ENCODE measurements at regions of chr10 and their contacts with region 1.

Region 1: DNA sequence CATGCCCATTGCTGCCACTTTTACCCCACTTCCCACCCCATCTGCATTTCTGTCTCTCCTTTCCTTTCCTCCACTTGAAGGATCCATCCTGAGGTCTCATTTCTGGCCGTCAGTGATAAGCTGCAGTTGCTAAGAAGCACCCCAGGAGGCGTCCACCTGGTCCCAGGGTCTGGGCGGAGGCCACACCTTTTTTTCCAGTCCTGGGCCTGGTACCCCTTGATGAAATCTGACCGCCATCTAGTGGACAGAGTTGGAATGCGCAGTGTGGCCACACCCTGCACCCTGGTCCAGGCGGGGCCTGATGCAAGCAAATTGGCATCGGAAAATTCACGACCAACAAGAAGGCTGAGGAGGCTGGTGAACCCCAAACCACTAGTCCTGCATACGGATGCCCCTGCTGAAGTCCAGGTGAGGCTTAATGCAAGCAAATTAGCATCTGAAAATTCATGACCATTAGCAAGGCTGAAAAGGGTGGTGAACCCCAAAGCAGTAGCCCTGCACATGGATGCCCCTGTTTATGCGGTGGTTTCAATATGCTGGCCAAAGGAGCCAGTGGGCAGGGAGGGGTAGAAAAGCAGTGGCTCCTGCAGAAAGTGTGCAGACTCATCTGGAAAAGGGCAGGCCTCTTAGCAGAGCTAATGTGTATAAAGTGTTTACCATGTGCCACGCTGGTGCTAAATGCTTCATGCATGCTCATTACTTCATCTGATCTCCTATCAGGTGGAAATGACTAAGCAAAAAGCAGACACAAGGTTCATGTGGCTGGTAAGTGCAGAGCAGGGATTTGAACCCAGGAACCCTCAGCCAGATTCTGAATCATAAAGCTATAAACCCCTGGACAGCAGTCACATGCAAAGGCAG is 43.2 kb downstream of the GPAM start:
- DNase-seq: peak; percentile 79
- H3K4me3 ChIP-seq: no peak overlapping the region; a peak in 1 of 4 replicates
- H3K27ac ChIP-seq: no peak overlapping the region
- H3K4me1 ChIP-seq: peaks cover 0 to 5% of the 10 kb centered on the region in 2 experiments; a peak in 1 of 4 replicates
- H3K27me3 ChIP-seq: no peaks in the 10 kb centered on the region
- CTCF ChIP-seq: peak; percentile 84
- EP300 ChIP-seq: no peak
- RAD21 ChIP-seq: peak; percentile 86

Region 2: DNA sequence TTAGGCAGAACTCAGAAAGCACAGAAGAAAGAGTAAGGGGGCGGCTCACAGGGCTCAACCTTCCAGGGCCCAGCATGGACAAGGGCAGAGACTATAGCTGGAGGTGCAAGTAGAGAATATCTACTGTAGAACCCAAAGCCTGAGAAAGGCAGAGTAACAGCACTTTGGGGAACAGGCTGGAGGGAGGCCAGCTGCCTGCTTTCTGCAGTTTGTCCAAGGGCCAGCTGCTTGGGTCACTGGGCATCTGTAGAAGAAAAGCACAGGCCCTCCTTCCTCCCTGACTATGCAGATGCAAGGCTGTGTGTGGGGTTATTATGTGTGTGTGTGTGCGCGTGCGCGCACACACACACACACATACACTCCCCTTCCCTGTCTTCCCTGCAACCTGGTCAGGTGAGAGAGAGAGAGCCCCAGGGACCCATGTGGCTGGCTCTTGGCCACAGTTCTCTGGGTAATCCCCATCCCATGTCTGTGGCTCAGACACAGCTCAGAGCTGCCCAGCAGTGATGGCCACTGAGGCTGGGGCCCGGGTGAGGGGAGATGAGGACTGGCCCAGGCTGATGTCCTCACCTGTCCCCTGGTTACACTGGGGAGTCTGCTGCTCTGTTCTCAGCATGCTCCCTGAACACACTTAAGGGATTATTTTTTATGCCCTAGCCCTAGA is 1054.5 kb before region 1 on chr10:
- CTCF ChIA-PET with region 1: interaction called, 13 read pairs
- POLR2A ChIA-PET with region 1: no interaction called
- DNase-seq: no peak
- H3K4me3 ChIP-seq: no peak overlapping the region
- H3K27ac ChIP-seq: no peak overlapping the region
- H3K4me1 ChIP-seq: no peaks in the 10 kb centered on the region; a peak in 1 of 4 replicates
- H3K27me3 ChIP-seq: no peaks in the 10 kb centered on the region
- CTCF ChIP-seq: no peak
- EP300 ChIP-seq: no peak
- RAD21 ChIP-seq: no peak

Region 3: DNA sequence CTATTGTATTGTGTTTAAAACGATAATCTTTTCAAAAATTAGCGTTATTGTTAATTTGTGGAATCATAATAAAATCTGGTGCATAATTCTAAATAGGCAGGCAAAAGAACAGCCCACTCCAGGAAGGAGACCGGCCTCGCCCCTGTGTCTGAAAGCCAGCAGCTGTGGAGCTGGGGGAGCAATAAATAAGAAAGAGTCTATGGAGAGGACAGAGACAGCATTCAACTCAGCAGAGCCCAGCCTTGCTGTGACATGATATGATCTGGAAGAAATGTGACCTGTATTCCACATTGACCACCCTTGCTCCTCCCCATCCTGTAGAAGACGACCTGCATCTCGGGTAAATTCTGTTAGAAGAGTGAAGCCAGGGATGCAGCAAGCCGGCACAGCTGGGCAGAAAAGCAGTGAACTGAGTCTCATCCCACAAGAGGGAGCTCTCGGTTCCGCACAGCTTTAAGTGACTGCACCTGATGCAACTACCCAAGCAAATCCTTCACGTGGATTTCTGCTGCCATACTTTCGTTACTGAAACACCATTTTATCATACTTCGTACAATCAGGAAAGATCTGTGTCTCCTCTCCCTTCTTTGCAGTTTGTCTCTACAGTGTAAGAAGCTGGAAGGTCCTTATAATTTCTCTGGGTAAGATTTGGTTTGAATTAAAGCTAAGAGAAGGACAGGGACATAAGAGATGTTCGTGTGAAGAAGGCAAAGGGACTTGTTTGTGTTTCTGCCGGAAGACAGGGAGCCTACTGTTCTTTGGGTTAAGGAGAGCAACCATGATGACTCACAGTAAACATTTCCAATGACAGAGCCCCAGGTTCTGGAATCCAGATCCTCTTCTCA is 383.9 kb before region 1 on chr10:
- CTCF ChIA-PET with region 1: interaction called, 102 read pairs
- POLR2A ChIA-PET with region 1: interaction called, 4 read pairs
- DNase-seq: peak; percentile 18
- H3K4me3 ChIP-seq: peak overlapping the region in 1 of 2 experiments; percentile 23; a peak in 1 of 4 replicates
- H3K27ac ChIP-seq: no peak overlapping the region
- H3K4me1 ChIP-seq: no peaks in the 10 kb centered on the region
- H3K27me3 ChIP-seq: no peaks in the 10 kb centered on the region
- CTCF ChIP-seq: no peak
- EP300 ChIP-seq: no peak
- RAD21 ChIP-seq: peak; percentile 70

Region 4: GRCh38 chr10:112115799-112116385 is 24.4 kb before region 1 on chr10:
- CTCF ChIA-PET with region 1: interaction called, 238 read pairs
- POLR2A ChIA-PET with region 1: no interaction called
- DNase-seq: peak; percentile 67
- H3K4me3 ChIP-seq: no peak overlapping the region; a peak in 1 of 4 replicates
- H3K27ac ChIP-seq: no peak overlapping the region
- H3K4me1 ChIP-seq: no peaks in the 10 kb centered on the region
- H3K27me3 ChIP-seq: no peaks in the 10 kb centered on the region
- CTCF ChIP-seq: peak; percentile 64
- EP300 ChIP-seq: no peak
- RAD21 ChIP-seq: peak; percentile 64

Region 5: DNA sequence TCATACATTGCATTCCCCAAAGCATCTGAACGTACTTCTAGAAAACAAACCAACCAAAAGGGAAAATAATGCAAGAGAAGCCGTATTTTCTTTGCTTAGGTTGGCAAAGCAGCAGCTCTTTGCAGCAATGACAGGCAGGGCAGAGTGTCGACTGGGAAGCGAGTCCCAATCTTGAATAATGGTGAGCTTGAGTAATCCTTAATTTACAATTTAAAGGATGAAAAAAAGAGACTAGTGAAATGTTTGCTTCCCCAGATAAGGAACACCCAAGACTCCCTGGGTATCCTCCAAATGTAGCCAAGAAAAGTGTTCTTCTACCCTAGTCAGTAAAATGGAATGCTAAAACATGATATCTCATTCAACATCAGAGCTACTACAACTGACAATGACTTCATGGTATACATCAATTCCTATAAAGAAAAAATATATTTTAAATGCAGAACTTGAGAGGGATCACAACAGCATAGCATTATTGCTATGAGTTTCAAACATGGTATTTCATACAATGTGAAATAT is 11.2 kb after region 1 on chr10:
- CTCF ChIA-PET with region 1: interaction called, 17 read pairs
- POLR2A ChIA-PET with region 1: no interaction called
- DNase-seq: no peak
- H3K4me3 ChIP-seq: no peak overlapping the region
- H3K27ac ChIP-seq: no peak overlapping the region
- H3K4me1 ChIP-seq: no peaks in the 10 kb centered on the region; a peak in 1 of 4 replicates
- H3K27me3 ChIP-seq: no peaks in the 10 kb centered on the region
- CTCF ChIP-seq: no peak
- EP300 ChIP-seq: no peak
- RAD21 ChIP-seq: no peak

Region 6: GRCh38 chr10:112307358-112308124 is 167.2 kb after region 1 on chr10:
- CTCF ChIA-PET with region 1: interaction called, 125 read pairs
- POLR2A ChIA-PET with region 1: no interaction called
- DNase-seq: peak; percentile 66
- H3K4me3 ChIP-seq: no peak overlapping the region
- H3K27ac ChIP-seq: no peak overlapping the region
- H3K4me1 ChIP-seq: peaks cover 0 to 5% of the 10 kb centered on the region in 2 experiments; a peak in 1 of 4 replicates
- H3K27me3 ChIP-seq: 0 out of 2 replicates have a peak, but pooled peaks cover 5% of the 10 kb centered on the region
- CTCF ChIP-seq: peak; percentile 58
- EP300 ChIP-seq: no peak
- RAD21 ChIP-seq: peak; percentile 79